ENCODE measurements at regions of chr2 and their contacts with region 1.

Region 1: GRCh38 chr2:227406177-227407031 is 18.7 kb upstream of the SCYGR1 start:
- DNase-seq: no peak

Region 2: DNA sequence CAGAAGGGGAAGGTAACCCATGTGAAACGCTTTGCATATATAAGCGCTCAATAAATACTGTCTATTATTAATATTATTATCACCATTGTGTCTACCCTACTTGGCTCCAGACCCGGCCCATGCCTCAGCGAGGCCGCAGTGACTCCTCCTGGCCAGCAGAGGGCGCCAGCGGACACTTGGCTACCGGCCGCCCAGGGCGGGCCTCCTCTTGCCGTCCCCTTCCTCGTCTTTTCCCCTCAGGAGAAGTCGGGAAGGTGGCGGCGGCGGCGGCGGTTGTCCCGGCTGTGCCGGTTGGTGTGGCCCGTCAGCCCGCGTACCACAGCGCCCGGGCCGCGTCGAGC is 65.5 kb after region 1 on chr2 and contains the start of gene AGFG1:
- intact Hi-C with region 1: loop called (anchors 5 kb)
- DNase-seq: peak; percentile 96
- total RNA-seq, gene AGFG1: 58.2 TPM

Region 3: GRCh38 chr2:227578651-227579050 is 172.2 kb after region 1 on chr2:
- intact Hi-C with region 1: loop called (anchors 10 kb)
- DNase-seq: no peak

Region 4: DNA sequence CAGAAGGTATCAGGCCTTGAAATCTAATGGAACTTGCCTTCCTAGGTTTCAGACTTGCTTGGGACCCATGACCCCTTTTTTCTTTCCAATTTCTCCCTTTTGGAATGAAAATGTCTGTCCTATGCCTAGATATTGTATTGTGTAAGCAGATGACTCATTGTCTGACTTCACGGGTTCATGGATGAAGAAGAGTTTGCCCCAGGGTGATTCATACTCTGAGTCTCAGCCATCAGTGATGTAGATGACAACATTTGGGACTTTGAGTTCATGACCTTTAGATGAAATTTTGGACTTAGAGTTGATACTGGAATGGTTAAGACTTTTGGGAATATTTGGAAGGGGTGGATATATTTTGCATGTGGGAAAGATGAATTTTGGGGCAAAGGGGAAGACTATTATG is 249.1 kb after region 1 on chr2:
- intact Hi-C with region 1: loop called (anchors 5 kb)
- DNase-seq: no peak

Region 5: DNA sequence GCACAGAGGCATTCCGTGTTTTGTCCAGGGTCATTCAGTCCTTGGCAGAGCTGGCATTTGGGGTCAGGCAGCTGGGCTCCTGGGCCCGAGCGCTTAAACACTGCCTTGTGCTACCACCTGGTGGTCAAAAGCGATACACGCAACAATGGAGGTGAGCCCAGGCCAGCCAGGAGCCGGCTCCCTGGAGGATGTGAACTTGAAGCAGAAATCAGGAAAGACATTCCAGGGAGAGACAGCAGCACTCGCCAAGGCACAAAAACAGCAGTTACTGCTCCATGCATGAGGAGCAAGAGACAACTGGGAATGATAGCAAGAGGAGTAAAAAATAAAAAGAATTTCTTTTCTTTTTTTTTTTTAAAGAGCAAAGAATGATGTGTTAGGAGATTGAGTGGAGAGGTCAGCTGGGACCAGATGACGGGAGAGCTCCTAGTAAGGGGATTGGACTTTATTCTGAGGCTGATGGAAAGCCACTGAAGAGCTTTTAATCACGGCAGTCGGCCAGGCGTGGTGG is 360.0 kb after region 1 on chr2:
- intact Hi-C with region 1: loop called (anchors 1 kb)
- DNase-seq: peak; percentile 82

Region 6: DNA sequence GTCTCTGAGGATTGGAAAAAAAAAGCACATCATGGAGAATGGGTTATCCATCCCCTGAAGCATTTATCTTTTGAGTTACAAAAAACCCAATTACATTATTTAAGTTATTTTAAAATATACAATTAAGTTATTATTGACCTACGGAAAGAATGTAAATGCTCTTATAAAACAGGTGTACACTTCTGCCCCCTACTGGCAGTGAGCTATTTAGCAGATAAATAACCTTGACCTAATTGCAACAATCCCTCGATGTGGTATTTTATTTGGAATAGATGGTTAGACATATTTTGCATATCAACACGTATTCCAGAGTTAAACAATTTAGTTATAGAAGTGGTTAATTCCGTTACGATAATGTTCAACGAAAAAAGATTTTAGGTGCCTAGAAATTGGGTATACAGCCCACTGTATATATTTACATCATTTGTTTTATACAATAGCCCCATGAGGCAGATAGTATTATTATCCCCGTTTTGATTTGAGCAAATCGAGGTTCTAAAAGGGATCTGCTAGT is 455.9 kb after region 1 on chr2:
- intact Hi-C with region 1: loop called (anchors 10 kb)
- DNase-seq: no peak